GM10248 (cell line): ENCODE measurements at regions of chr6 and their contacts with region 1.

Region 1: DNA sequence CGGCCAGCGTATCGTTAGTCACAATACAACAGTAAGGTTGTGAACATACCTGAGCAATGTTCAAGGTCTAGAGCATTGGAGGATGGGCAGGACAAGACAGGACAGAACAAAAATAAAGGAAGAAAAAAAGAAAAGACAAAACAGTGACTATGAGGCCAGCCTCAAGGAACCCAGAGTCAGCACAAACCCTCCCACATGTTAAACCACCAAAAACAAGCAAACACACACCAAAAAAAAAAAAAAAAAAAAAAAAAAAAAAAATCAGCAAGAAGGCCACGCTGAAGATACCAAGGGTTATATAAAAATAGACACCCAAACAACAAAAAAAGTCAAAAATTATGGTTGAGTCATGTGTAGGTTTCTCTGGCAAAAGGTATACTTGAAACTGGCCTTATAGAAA is 12.8 kb downstream of the MED23 start:
- DNase-seq: no peak
- CTCF ChIP-seq: no peak

Region 2: DNA sequence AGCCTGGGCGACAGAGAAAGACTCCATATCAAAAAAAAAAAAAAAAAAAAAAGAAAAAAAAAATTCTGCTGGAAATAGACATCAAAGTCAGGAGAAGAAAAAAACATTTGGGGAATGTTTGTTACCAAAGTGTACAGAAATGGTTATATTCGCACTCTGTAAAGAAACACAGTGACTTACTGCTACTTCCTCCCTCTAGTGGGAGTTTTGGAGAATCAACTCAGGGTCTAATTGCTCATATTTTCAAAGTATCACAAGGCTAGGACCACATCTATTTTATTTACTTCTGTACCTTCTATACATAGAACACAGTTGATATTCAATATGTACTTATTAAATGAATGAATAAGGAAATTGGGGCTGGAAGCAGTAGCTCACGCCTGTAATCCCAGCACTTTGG is 17.8 kb before region 1 on chr6:
- CTCF ChIA-PET with region 1: interaction called, 10 read pairs
- POLR2A ChIA-PET with region 1: no interaction called
- DNase-seq: no peak
- CTCF ChIP-seq: peak; percentile 10

Region 3: DNA sequence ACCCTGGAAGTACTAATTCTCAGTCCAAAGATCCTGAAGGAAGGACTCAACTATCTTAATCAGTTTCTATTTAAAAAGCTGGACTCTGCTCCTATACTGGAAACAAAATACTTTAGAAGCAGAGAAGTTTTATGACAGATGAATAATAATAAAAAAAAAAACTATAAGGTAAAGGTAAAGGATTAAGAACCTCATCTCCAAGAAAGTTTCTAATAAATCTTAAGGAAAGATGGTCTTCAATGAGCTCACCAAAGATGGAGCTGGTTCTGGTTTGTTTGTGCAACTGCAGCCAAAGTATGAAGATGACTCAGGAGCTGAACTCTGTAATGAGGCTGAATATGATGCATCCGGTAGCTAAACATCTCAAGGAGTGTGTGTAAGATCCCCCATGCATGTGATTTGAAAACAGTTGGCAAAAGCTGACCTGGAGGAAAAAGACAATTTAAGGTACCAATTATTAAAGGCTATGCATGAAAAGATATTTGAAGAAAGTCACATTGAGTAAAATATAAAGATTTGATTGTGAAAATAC is 12.4 kb before region 1 on chr6:
- CTCF ChIA-PET with region 1: interaction called, 10 read pairs
- POLR2A ChIA-PET with region 1: no interaction called
- DNase-seq: no peak
- CTCF ChIP-seq: no peak